OCI-LY7 (cell line): ENCODE measurements at regions of chr18 and their contacts with region 1.

Region 1: DNA sequence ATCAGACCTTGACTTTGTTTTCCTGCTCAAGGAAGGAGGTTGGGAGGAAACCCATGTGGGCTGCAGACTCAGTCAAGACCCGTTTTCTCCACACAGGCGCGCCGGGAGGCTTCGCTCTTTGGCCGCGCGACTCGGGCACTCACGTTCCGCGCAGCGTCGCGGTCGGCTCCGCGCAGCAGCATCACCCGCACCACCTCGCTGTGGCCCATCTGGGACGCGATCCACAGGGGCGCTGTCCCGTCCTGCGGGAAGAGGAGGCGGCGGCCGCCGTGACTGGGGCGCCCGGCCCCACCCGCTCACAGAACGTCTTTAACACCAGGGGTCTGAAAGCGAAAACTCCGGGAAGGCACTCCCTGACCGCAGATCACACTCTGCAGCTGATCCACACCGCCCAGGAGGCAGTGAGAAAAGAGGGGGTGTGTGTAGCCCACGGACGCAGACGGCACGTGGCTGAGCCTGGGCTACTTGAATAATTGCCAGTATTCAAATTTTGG is 33.1 kb upstream of the NPC1 start:
- DNase-seq: no peak
- H3K4me3 ChIP-seq: no peak overlapping the region
- H3K27ac ChIP-seq: no peak overlapping the region
- H3K4me1 ChIP-seq: no peaks in the 10 kb centered on the region
- CTCF ChIP-seq: no peak

Region 2: DNA sequence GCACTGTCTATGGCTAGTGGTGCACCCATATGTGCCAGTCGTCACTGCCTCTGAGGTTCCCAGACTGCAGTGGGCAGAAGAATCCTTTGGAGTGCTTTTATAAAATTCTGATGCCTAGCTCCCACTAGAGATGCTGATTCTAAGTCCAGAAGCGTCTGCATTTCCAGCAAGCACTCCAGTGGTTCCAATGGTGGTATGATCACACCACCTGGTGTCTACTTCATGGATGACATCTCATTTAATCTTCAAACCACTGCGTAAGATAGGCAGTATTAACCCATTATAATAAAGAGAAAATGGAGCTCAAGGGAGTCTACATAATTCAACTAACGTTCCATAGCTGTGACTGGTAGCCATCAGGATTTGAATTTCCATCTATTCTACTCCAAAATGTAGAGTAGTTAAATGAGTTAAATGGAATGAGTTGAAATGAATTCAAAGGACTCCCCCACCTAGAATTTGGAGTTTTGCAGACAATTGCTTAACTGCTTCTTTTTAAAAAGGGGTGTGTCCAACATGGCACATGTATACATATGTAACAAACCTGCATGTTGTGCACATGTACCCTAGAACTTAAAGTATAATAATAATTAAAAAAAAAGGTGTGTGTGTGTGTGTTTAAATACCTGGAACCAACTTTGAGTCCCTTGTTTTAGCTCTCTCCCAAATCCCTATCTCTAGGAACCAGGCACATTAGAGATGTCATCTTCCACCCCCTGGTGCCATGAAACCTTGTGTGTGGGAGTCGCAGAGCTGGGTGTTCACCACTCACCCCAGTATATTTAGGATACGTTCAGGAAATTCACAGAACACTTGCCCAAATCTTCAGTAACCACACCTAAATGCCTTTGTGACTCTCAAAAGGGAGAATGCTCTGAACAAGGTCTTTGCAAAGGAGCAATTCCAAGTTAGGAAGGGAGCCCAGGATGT is 83.9 kb after region 1 on chr18:
- CTCF ChIA-PET with region 1: no interaction called
- POLR2A ChIA-PET with region 1: no interaction called
- intact Hi-C with region 1: loop called (anchors 5 kb)
- DNase-seq: peak; percentile 26
- H3K4me3 ChIP-seq: no peak overlapping the region
- H3K27ac ChIP-seq: no peak overlapping the region
- H3K4me1 ChIP-seq: peaks cover 5% of the 10 kb centered on the region
- CTCF ChIP-seq: peak; percentile 65

Region 3: GRCh38 chr18:23812546-23813440 is 193.4 kb after region 1 on chr18:
- CTCF ChIA-PET with region 1: no interaction called
- POLR2A ChIA-PET with region 1: no interaction called
- intact Hi-C with region 1: loop called (anchors 1 kb)
- DNase-seq: peak; percentile 46
- H3K4me3 ChIP-seq: no peak overlapping the region
- H3K27ac ChIP-seq: no peak overlapping the region
- H3K4me1 ChIP-seq: peaks cover 14% of the 10 kb centered on the region
- CTCF ChIP-seq: peak; percentile 85

Region 4: GRCh38 chr18:24118750-24119577 is 499.5 kb after region 1 on chr18:
- CTCF ChIA-PET with region 1: no interaction called
- POLR2A ChIA-PET with region 1: no interaction called
- intact Hi-C with region 1: loop called (anchors 1 kb)
- DNase-seq: peak; percentile 82
- H3K4me3 ChIP-seq: no peak overlapping the region
- H3K27ac ChIP-seq: no peak overlapping the region
- H3K4me1 ChIP-seq: no peaks in the 10 kb centered on the region
- CTCF ChIP-seq: peak; percentile 96